ENCODE measurements at regions of chr12 and their contacts with region 1.

Region 1: DNA sequence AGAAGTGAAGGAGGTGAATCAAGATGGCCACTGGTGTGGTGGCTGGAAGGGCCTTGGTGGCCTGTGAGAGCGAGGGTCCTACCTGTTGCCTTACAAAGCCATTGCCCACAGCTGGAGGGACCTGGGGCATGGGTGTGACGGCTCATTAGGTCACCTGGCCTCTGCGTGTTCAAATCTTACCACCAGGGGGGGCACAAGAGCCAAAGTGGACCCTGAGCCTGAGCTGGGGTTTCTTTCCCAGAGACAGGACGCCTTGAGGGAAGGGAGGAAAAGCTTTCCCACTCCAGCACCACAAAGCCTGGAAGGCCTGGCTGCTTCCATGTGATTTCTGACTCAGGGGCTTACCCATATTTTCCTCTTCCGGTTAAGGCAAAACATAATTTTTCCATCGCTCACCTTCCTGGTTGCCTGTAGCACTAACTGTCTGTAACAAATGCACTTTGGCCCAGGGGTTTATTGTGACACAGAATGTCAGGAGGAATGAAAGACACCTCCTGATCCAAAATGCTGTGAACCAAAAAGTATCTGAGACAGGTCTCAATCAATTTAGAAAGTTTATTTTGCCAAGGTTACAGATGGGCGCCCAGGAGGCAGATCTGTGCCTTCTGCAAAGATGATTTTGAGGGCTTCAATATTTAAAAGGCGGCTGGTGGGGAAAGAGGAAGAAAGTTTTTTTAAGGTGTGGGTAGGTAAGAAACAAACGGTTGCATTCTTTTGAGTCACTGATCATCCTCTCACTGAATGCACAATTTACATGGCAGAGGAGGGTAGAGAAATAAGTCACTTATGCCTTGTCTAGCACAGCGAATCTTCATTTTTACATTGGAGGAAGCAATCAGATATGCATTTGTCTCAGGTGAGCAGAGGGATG is 4.3 kb upstream of the CD9 start:
- DNase-seq: peak; percentile 96
- H3K4me3 ChIP-seq: no peak overlapping the region
- H3K27ac ChIP-seq: peak overlapping the region; percentile 56 to 59; a peak in 3 of 4 replicates
- H3K4me1 ChIP-seq: peaks cover 0 to 28% of the 10 kb centered on the region in 2 experiments; a peak in 1 of 4 replicates
- H3K27me3 ChIP-seq: no peaks in the 10 kb centered on the region
- CTCF ChIP-seq: peak; percentile 90
- EP300 ChIP-seq: no peak
- RAD21 ChIP-seq: peak; percentile 92

Region 2: DNA sequence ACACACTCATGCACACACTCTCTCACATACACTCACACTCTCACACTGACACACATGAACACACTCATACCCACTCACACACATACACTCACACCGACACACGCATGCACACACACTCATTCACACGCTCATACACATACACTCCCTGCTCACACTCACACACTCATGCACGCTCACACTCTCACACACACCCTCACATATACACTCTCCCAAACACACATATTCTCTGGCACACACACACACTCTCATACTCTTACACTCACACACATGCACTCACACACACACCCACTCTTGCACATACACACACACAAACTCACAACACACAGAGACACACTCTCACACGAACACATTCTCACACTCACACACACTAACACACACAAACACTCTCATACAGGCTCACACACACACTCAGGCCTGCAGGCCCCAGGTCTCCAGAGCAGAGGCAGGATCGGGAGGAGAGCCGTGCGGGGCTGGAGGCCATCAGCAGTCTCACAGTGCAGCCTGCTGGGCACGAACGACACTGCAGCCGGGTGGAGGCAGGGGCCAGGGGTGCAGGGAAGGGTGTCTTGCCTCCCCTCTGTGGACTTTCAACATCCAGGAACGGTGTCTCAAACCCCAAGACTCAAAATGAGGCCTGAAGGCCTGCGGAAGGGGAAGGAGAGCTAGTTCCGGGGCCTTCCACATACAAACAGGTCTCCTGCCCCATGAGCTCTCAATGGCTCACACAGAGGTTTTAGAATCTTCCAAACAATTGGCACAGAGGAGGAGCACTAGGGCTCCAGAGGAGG is 399.5 kb before region 1 on chr12:
- CTCF ChIA-PET with region 1: no interaction called
- POLR2A ChIA-PET with region 1: no interaction called
- DNase-seq: peak; percentile 49
- H3K4me3 ChIP-seq: peak overlapping the region in 1 of 2 experiments; percentile 39; a peak in 1 of 4 replicates
- H3K27ac ChIP-seq: no peak overlapping the region
- H3K4me1 ChIP-seq: no peaks in the 10 kb centered on the region
- H3K27me3 ChIP-seq: peaks cover 12% of the 10 kb centered on the region; the same call in 1 of the 2 replicates
- CTCF ChIP-seq: peak; percentile 58
- EP300 ChIP-seq: no peak
- RAD21 ChIP-seq: peak; percentile 59

Region 3: DNA sequence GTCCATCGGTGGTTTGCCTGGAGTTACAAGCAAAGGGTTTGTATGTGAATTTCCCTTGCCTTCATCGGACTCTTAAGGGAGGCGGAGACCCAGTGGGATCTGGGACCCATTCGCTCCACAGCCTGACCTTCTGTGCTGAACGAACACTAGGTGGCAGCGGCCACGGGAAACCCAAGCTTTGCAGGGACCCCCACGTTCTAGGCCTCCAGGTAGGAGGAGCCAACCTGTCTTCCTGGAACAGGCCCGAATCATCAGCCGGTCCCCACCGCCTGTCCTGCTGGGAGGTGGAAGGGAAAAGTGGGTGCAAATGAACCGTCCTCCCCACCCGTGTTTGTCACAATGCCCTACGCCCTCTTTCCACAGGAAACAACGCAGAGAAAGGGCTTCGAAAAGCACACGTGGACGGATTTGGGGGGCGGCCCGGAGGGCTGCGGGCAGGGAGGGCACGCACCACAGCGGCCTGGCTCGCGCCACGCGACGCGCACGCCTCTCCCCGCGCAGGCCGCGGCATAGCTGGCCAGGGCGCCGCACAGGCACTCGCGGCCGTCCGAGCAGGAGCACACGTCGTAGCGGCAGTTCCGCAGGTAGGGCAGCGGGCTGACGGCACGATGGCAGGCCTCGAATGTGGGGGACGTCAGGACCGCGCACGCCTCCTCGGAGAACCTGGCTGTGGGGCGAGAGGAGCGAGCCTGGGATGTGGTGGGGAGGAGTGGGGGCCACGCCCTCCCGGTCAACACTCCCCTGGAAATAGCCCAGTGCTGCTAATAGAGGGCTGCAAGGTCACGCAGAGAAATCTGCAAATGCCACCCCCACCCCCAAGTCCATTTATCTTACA is 139.3 kb before region 1 on chr12:
- CTCF ChIA-PET with region 1: interaction called, 98 read pairs
- POLR2A ChIA-PET with region 1: no interaction called
- DNase-seq: peak; percentile 74
- H3K4me3 ChIP-seq: no peak overlapping the region
- H3K27ac ChIP-seq: no peak overlapping the region; a peak in 1 of 4 replicates
- H3K4me1 ChIP-seq: peaks cover 4 to 25% of the 10 kb centered on the region in 2 experiments; a peak in 2 of 4 replicates
- H3K27me3 ChIP-seq: no peaks in the 10 kb centered on the region
- CTCF ChIP-seq: peak; percentile 49
- EP300 ChIP-seq: no peak
- RAD21 ChIP-seq: peak; percentile 42; the same call in 1 of the 2 replicates

Region 4: DNA sequence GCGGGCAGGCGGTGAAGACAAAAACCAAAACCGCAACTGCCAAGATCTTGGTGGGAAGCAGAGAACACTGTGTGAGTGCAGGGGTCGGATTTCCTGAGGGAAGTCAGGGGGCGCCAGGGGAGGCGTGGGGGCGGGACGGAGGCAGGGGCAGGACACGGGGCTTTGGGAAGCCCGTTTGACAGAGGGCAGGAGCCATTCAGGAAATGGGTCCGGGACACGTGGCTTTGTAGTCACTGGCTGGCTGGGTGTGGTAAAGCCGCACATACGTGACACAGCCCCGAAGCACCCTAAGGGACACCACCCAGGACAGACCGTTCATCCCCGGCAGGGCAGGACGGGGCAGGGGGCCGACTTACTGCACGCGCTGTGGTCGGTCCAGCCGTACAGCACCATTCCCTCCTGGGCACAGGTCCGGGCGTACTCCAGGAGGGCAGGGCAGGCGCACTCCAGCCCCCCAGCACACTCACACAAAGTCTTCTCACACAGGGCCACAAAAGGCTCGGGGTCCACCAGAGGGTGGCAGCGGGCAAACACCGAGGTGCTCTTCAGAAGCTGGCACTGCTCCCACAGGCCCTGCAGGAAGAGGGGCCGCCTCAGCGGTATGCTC is 120.8 kb before region 1 on chr12:
- CTCF ChIA-PET with region 1: interaction called, 98 read pairs
- POLR2A ChIA-PET with region 1: no interaction called
- DNase-seq: no peak
- H3K4me3 ChIP-seq: no peak overlapping the region
- H3K27ac ChIP-seq: peak overlapping the region in 1 of 2 experiments; percentile 67; a peak in 1 of 4 replicates
- H3K4me1 ChIP-seq: peaks cover 0 to 42% of the 10 kb centered on the region in 2 experiments; a peak in 1 of 4 replicates
- H3K27me3 ChIP-seq: no peaks in the 10 kb centered on the region
- CTCF ChIP-seq: no peak
- EP300 ChIP-seq: no peak
- RAD21 ChIP-seq: no peak

Region 5: DNA sequence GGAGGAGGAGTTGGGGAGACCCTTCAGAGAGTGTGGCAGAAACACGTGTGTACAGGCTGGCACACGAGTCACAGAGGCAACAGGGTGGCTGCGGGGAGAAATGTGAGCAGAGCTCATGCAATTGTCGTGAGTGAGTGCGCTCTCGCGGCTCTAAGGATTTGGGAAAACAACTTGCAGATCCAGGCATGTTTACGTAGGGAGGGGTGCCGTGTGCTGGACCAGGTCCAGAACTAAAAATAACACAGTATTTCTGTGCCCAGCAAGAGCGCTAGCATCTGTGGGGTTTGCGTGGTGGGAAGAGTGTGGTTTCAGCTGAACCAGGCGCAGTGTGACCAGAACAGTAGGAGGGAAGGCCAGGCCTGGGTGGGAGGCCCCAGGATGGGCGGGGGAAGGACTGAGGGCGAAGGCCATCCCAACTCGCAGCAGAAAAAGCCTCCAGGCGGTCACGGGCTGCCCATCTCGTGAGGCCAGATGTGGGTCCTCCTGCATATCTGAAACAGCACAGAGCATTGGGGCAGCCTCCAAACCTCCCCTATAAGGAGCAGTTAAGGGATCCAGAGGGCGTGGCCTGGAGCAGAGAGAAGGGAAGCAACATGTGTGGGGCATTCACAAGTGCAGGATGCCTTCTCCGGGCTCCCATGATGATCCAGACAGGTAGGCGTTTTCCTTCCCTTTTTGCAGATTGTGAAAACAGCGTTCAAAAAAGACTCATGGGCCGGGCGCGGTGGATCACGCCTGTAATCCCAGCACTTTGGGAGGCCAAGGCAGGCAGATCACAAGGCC is 13.6 kb before region 1 on chr12:
- CTCF ChIA-PET with region 1: interaction called, 19 read pairs
- POLR2A ChIA-PET with region 1: no interaction called
- DNase-seq: peak; percentile 87
- H3K4me3 ChIP-seq: no peak overlapping the region
- H3K27ac ChIP-seq: peak overlapping the region in 1 of 2 experiments; percentile 83; a peak in 2 of 4 replicates
- H3K4me1 ChIP-seq: peaks cover 10 to 44% of the 10 kb centered on the region in 2 experiments; a peak in 2 of 4 replicates
- H3K27me3 ChIP-seq: no peaks in the 10 kb centered on the region
- CTCF ChIP-seq: no peak
- EP300 ChIP-seq: peak in 1 of 2 experiments; percentile 45; a peak in 1 of 4 replicates
- RAD21 ChIP-seq: no peak

Region 6: GRCh38 chr12:6230321-6231110 is 34.6 kb after region 1 on chr12:
- CTCF ChIA-PET with region 1: interaction called, 20 read pairs
- POLR2A ChIA-PET with region 1: no interaction called
- DNase-seq: no peak
- H3K4me3 ChIP-seq: no peak overlapping the region
- H3K27ac ChIP-seq: peak overlapping the region; percentile 43 to 64; a peak in 3 of 4 replicates
- H3K4me1 ChIP-seq: peaks cover 16 to 69% of the 10 kb centered on the region in 2 experiments; a peak in 2 of 4 replicates
- H3K27me3 ChIP-seq: no peaks in the 10 kb centered on the region
- CTCF ChIP-seq: no peak
- EP300 ChIP-seq: no peak
- RAD21 ChIP-seq: no peak

Region 7: GRCh38 chr12:6267139-6267721 is 71.3 kb after region 1 on chr12:
- CTCF ChIA-PET with region 1: interaction called, 299 read pairs
- POLR2A ChIA-PET with region 1: no interaction called
- DNase-seq: no peak
- H3K4me3 ChIP-seq: no peak overlapping the region
- H3K27ac ChIP-seq: no peak overlapping the region
- H3K4me1 ChIP-seq: peaks cover 0 to 40% of the 10 kb centered on the region in 2 experiments; a peak in 1 of 4 replicates
- H3K27me3 ChIP-seq: no peaks in the 10 kb centered on the region
- CTCF ChIP-seq: no peak
- EP300 ChIP-seq: no peak
- RAD21 ChIP-seq: no peak